ENCODE measurements at regions of chrX and their contacts with region 1.

Region 1: DNA sequence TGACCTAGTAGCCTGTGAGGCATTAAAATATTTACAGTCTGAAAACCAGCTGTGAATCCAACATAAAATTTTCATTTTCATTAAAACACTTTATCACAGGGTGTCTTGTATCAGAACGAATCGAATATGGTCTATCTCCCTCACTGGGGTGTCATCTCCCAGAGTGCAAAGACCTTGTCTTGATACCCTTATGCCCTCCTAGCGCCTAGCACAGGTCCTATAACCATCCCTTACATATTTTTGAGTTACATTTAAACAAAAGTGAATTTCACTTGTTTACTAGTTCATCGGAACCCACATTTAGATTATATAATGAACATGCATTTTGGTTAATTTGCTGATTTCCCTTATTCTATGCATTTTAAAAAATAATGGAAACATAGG is 14.0 kb downstream of the DIPK2B start:
- DNase-seq: no peak
- H3K4me3 ChIP-seq: no peak overlapping the region
- CTCF ChIP-seq: no peak

Region 2: DNA sequence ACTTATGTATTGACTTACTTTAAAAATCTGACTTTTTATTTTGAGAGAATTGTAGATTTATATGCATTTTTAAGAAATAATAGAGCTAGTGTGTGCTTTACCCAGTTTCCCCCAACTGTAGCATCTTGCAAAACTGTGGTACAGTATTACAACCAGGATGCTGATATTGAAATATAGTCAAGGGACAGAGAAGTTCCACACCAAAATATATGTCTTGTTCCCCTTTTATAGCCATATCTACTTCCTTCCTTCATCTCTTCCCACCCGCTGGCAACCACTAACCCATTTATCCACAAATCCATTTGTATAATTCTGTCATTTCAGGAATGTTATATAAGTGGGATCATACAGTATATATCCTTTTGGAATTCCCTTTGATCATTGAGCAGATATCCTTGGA is 296.8 kb before region 1 on chrX:
- CTCF ChIA-PET with region 1: no interaction called
- POLR2A ChIA-PET with region 1: no interaction called
- DNase-seq: no peak
- H3K4me3 ChIP-seq: no peak overlapping the region
- CTCF ChIP-seq: no peak

Region 3: GRCh38 chrX:45172890-45173289 is 13.7 kb before region 1 on chrX:
- CTCF ChIA-PET with region 1: interaction called, 16 read pairs
- POLR2A ChIA-PET with region 1: interaction called, 4 read pairs
- DNase-seq: no peak
- H3K4me3 ChIP-seq: no peak overlapping the region
- CTCF ChIP-seq: no peak

Region 4: GRCh38 chrX:45196701-45197100 is 10.1 kb after region 1 on chrX:
- CTCF ChIA-PET with region 1: interaction called, 37 read pairs
- POLR2A ChIA-PET with region 1: no interaction called
- DNase-seq: peak; percentile 37
- H3K4me3 ChIP-seq: no peak overlapping the region
- CTCF ChIP-seq: no peak